ENCODE measurements at regions of chr11 and their contacts with region 1.

Region 1: GRCh38 chr11:70699294-70700221 is 301.2 kb downstream of the CTTN start:
- DNase-seq: no peak
- H3K4me3 ChIP-seq: no peak overlapping the region
- H3K27ac ChIP-seq: peak overlapping the region in 1 of 2 donors; percentile 49
- H3K4me1 ChIP-seq: no peaks in the 10 kb centered on the region
- H3K27me3 ChIP-seq: no peaks in the 10 kb centered on the region
- CTCF ChIP-seq: no peak
- POLR2A ChIP-seq: no peak

Region 2: GRCh38 chr11:70751142-70751734 is 51.7 kb after region 1 on chr11:
- intact Hi-C with region 1: no loop called
- DNase-seq: no peak
- H3K4me3 ChIP-seq: no peak overlapping the region
- H3K27ac ChIP-seq: no peak overlapping the region
- H3K4me1 ChIP-seq: no peaks in the 10 kb centered on the region
- H3K27me3 ChIP-seq: peaks cover 0 to 4% of the 10 kb centered on the region in 2 donors
- CTCF ChIP-seq: no peak
- POLR2A ChIP-seq: no peak

Region 3: GRCh38 chr11:72652873-72653630 is 1953.5 kb after region 1 on chr11:
- intact Hi-C with region 1: loop called (anchors 10 kb)
- DNase-seq: no peak
- H3K4me3 ChIP-seq: no peak overlapping the region
- H3K27ac ChIP-seq: no peak overlapping the region
- H3K4me1 ChIP-seq: no peaks in the 10 kb centered on the region
- H3K27me3 ChIP-seq: no peaks in the 10 kb centered on the region
- CTCF ChIP-seq: no peak
- POLR2A ChIP-seq: no peak